Right ventricle myocardium inferior (tissue), 1 donor: ENCODE measurements at regions of chr16 and their contacts with region 1.

Region 1: DNA sequence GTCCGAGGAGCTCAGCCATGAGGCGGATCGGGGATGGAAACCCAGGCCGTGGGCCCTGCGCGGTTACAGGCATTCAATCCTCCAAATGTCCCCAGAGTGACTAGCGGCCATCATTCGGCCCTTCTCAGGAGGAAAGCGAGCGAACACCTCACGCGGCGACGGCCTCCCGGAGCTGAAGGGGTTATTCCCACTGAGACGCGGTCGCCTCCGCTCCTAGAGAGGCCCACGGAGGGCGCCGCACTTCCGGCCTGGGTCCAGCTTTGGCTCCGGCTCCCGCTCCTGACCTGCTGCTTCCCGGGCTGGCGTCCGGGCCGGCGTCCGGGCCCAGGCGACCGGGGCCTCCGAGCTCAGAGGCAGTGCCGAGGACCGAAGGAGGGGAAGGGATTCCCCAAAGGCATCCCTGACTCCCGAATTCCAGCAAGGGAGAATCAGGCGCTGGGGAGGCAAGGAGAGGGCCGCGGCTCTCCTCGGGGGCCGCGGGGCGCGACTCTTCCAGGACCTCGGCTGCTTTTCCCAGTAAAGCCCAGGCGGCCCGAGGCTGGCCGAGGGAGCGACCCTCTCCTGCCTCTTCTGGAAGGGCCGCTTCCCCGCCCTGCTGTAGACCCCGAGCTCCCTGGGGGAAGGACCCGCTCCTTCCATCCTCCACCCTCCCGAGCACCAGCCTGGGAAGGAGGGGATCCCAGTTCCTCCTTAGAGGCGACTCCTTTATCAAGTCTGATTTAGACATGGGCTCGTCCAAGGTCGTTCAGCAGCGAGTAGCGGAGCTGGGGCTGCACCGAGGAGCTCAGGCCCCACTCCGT is 18.6 kb upstream of the ZNF629 start:
- DNase-seq: peak; percentile 94
- ATAC-seq: peak; percentile 98

Region 2: DNA sequence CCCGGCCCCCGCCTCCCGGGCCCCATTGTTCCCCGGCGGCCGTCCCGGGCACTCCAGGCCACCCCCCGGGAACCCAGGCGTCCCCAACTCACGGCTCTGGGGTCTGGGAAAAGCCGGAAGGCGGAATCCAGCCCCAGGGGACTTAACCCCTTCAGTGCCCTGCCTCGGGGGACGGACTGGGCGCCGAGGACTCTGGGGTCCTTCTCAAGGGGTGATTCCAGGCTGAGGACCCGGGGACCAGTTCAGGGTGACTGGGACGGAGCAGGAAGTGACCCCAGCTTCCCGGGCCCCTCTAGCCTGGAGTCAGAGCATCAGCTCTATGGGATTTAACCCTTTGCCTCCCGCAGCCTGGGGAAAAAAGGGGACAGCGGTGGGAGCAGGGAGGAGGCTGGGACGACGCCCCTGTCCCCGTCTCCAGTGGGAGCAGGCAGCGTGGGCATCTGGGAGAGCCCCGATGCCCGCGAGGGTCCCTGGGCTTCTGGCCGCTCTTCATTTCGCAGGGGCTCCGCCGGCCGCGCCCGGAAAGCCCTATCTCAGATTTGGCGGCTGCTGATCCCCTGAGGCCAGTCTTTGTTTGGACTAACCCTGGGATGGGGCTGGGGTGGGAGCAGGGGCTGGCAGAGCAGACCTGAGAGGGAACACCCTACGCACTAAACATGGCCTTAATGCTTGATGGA is 18.5 kb before region 1 on chr16 and contains the start of gene ZNF629:
- intact Hi-C with region 1: loop called (anchors 2 kb)
- DNase-seq: no peak
- ATAC-seq: peak; percentile 84
- total RNA-seq, gene ZNF629: 17.4 TPM

Region 3: DNA sequence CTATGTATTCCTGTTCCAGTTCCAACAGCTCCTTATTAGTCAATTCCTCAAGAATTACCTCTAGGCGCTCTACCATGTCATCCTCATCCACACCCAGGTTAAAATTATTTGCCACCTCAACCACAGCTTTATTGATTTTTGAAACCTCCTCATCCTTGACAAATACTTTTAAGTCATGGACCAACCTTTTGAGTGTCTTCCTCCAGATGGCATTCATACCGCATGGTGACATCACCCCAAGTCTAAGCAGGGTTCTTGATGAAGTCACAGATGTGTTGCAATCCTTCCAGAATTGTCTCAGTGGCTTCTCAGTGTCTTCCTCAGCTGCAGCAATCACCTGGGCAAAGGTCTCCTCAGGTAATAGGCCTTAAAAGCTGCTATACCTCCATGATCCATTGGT is 48.2 kb after region 1 on chr16:
- intact Hi-C with region 1: no loop called
- DNase-seq: no peak
- ATAC-seq: no peak